Calu3 (cell line): ENCODE measurements at regions of chr5 and their contacts with region 1.

Region 1: GRCh38 chr5:160260881-160261815 is 31.8 kb downstream of the FABP6 start:
- DNase-seq: peak; percentile 71
- H3K4me3 Mint-ChIP-seq: peak overlapping the region; percentile 31
- H3K27ac Mint-ChIP-seq: peak overlapping the region; percentile 81
- H3K4me1 Mint-ChIP-seq: peaks cover 34% of the 10 kb centered on the region
- H3K27me3 Mint-ChIP-seq: no peaks in the 10 kb centered on the region
- CTCF ChIP-seq: no peak

Region 2: DNA sequence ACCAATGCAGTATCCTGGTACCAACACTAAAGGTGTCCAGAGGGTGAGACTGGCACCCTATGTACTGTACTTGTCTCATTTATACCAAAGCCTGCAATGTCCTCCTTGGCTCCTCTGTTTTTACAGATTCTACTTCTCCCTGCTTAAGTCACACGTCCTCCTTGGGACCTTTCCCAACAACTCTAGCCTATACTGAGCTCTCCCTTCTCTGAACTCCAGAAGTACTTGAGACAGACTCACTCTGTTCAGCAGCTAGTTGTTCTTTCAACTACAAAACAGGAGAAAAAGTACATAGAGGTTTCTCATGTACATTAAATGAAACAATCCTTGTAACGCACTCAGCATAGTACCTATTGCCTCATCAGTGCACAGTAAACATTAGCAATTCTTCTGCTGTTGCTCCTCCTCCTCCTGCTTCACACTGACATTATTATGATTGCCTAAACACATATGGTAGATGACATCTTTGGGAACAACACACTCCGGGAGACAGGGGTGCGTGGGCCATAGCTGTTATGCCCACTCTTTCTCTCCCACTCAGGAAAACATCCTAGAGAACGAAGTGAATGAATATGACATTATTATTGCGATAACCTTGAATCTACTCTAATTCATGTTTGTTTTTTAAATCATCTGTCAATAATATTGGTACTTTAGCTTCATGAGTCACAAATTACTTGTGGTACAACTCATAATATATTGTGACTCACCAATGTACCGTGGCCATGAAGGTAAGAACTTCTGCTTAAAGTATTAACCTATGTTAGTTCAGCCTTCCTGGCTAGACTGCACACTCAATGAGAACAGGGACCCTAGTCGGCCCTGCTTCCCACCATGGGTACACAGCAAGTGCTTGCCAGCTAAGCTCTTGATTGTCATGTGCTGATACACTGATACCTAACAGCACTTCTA is 525.1 kb before region 1 on chr5:
- CTCF ChIA-PET with region 1: no interaction called
- intact Hi-C with region 1: no loop called
- DNase-seq: no peak
- H3K4me3 Mint-ChIP-seq: no peak overlapping the region
- H3K27ac Mint-ChIP-seq: no peak overlapping the region
- H3K4me1 Mint-ChIP-seq: peaks cover 12% of the 10 kb centered on the region
- H3K27me3 Mint-ChIP-seq: no peaks in the 10 kb centered on the region
- CTCF ChIP-seq: no peak

Region 3: DNA sequence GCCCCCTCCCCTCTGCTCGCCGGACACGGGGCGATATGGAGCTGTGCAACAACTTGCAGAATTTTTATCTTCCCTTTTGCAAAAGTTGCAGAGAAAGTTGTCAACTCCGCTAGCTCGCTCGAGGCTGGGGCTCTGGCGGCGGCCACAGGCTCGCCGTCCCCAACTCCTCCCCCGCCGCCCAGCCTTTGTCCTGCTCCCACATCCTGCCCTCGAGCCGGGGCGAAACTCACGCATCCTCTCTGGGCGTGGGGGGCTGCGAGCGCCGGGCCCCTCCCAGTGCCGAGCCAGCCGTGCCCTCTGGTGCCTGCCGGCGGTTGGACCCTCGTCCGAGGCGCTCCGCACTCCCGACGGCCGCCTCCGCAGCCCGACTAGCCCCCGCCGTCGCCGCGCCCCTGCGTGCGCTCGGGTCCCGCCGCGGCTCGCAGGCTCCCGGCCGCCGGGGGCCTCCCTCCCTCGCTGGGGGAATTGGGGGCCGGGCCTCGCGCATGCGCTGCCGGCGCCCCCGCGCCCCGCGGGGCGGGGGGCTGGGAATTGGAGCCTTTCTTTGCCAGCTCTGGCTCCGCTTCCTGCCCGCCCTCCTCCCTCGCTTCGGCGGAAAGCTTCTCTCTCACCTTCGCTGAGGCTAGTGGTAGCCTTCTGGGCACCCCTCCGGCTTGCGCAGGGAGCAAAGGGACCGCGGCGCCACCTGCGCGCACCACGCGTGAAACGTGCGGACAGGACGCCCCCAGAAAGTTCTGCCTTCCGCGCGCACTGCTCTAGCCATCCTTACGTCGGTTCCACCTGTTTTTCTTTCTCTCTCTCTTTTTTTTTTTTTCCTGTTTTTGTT is 51.2 kb after region 1 on chr5 and contains the start of gene CCNJL:
- CTCF ChIA-PET with region 1: no interaction called
- intact Hi-C with region 1: loop called (anchors 5 kb)
- DNase-seq: peak; percentile 84
- H3K4me3 Mint-ChIP-seq: peak within 1 kb of the TSS; percentile 81
- H3K27ac Mint-ChIP-seq: peak within 1 kb of the TSS; percentile 73
- H3K4me1 Mint-ChIP-seq: peaks cover 59% of the 10 kb centered on the region
- H3K27me3 Mint-ChIP-seq: no peaks in the 10 kb centered on the region
- CTCF ChIP-seq: no peak
- total RNA-seq, gene CCNJL: 13.2 and 17.4 TPM in 2 replicates